ENCODE measurements at regions of chr19 and their contacts with region 1.

Region 1: GRCh38 chr19:10760273-10760944 is 42.5 kb downstream of the DNM2 start:
- DNase-seq: peak; percentile 78
- ATAC-seq: peak; percentile 56
- H3K4me3 ChIP-seq: peak overlapping the region in 4 of 5 experiments; percentile 14 to 57 (median 28)
- H3K4me3 Mint-ChIP-seq: peak overlapping the region; percentile 85
- H3K27ac ChIP-seq: peak overlapping the region; percentile 86 to 92
- H3K27ac Mint-ChIP-seq: peak overlapping the region; percentile 94
- H3K4me1 ChIP-seq: peaks cover 63 to 92% of the 10 kb centered on the region in 2 donors
- H3K4me1 Mint-ChIP-seq: peaks cover 82% of the 10 kb centered on the region
- H3K27me3 ChIP-seq: no peaks in the 10 kb centered on the region
- H3K27me3 Mint-ChIP-seq: no peaks in the 10 kb centered on the region
- CTCF ChIP-seq: no peak

Region 2: GRCh38 chr19:10730923-10731322 is 29.5 kb before region 1 on chr19:
- CTCF ChIA-PET with region 1: interaction called, 12 read pairs
- POLR2A ChIA-PET with region 1: interaction called, 18 read pairs
- intact Hi-C with region 1: loop called (anchors 1 kb)
- DNase-seq: peak; percentile 48
- ATAC-seq: peak; percentile 23
- H3K4me3 ChIP-seq: no peak overlapping the region
- H3K4me3 Mint-ChIP-seq: peak overlapping the region; percentile 84
- H3K27ac ChIP-seq: peak overlapping the region; percentile 63 to 82
- H3K27ac Mint-ChIP-seq: peak overlapping the region; percentile 85
- H3K4me1 ChIP-seq: peaks cover 39 to 60% of the 10 kb centered on the region in 2 donors
- H3K4me1 Mint-ChIP-seq: peaks cover 52% of the 10 kb centered on the region
- H3K27me3 ChIP-seq: no peaks in the 10 kb centered on the region
- H3K27me3 Mint-ChIP-seq: no peaks in the 10 kb centered on the region
- CTCF ChIP-seq: no peak

Region 3: GRCh38 chr19:10742476-10742875 is 17.9 kb before region 1 on chr19:
- CTCF ChIA-PET with region 1: interaction called, 3 read pairs
- POLR2A ChIA-PET with region 1: interaction called, 3 read pairs
- intact Hi-C with region 1: loop called (anchors 2 kb)
- DNase-seq: no peak
- ATAC-seq: no peak
- H3K4me3 ChIP-seq: no peak overlapping the region
- H3K4me3 Mint-ChIP-seq: peak overlapping the region; percentile 39
- H3K27ac ChIP-seq: peak overlapping the region in 1 of 2 donors; percentile 15
- H3K27ac Mint-ChIP-seq: peak overlapping the region; percentile 34
- H3K4me1 ChIP-seq: peaks cover 36 to 62% of the 10 kb centered on the region in 2 donors
- H3K4me1 Mint-ChIP-seq: peaks cover 62% of the 10 kb centered on the region
- H3K27me3 ChIP-seq: no peaks in the 10 kb centered on the region
- H3K27me3 Mint-ChIP-seq: no peaks in the 10 kb centered on the region
- CTCF ChIP-seq: no peak

Region 4: GRCh38 chr19:10780368-10780767 is 20.0 kb after region 1 on chr19:
- CTCF ChIA-PET with region 1: interaction called, 3 read pairs
- POLR2A ChIA-PET with region 1: interaction called, 14 read pairs
- intact Hi-C with region 1: loop called (anchors 2 kb)
- DNase-seq: no peak
- ATAC-seq: no peak
- H3K4me3 ChIP-seq: no peak overlapping the region
- H3K4me3 Mint-ChIP-seq: no peak overlapping the region
- H3K27ac ChIP-seq: peak overlapping the region in 1 of 2 donors; percentile 60
- H3K27ac Mint-ChIP-seq: peak overlapping the region; percentile 86
- H3K4me1 ChIP-seq: peaks cover 42 to 67% of the 10 kb centered on the region in 2 donors
- H3K4me1 Mint-ChIP-seq: peaks cover 54% of the 10 kb centered on the region
- H3K27me3 ChIP-seq: no peaks in the 10 kb centered on the region
- H3K27me3 Mint-ChIP-seq: no peaks in the 10 kb centered on the region
- CTCF ChIP-seq: no peak

Region 5: GRCh38 chr19:10928525-10929401 is 168.4 kb after region 1 on chr19 and contains the starts of genes TIMM29 and YIPF2:
- CTCF ChIA-PET with region 1: no interaction called
- POLR2A ChIA-PET with region 1: no interaction called
- intact Hi-C with region 1: no loop called
- DNase-seq: peak; percentile 92
- ATAC-seq: peak; percentile 82
- H3K4me3 ChIP-seq: peak within 1 kb of the TSS; percentile 54 to 94 (median 83)
- H3K4me3 Mint-ChIP-seq: peak within 1 kb of the TSS; percentile 93
- H3K27ac ChIP-seq: peak within 1 kb of the TSS; percentile 41 to 72
- H3K27ac Mint-ChIP-seq: peak within 1 kb of the TSS; percentile 90
- H3K4me1 ChIP-seq: peaks cover 13 to 24% of the 10 kb centered on the region in 2 donors
- H3K4me1 Mint-ChIP-seq: peaks cover 18% of the 10 kb centered on the region
- H3K27me3 ChIP-seq: no peaks in the 10 kb centered on the region
- H3K27me3 Mint-ChIP-seq: no peaks in the 10 kb centered on the region
- CTCF ChIP-seq: no peak
- total RNA-seq, gene TIMM29: 24.2 and 26.1 TPM in 2 replicates
- total RNA-seq, gene YIPF2: 19.8 and 21.9 TPM in 2 replicates

Measured in B cell (primary cell).